MCF 10A (cell line): ENCODE measurements at regions of chr12 and their contacts with region 1.

Region 1: GRCh38 chr12:92928962-92929915 is at the start of gene EEA1:
- DNase-seq: peak; percentile 95
- H3K4me3 Mint-ChIP-seq: peak within 1 kb of the TSS; percentile 75
- H3K27ac Mint-ChIP-seq: peak within 1 kb of the TSS; percentile 88
- H3K4me1 Mint-ChIP-seq: peaks cover 26% of the 10 kb centered on the region
- H3K27me3 Mint-ChIP-seq: no peaks in the 10 kb centered on the region
- CTCF ChIP-seq: no peak
- total RNA-seq, gene EEA1: 46.3 and 50.1 TPM in 2 replicates

Region 2: GRCh38 chr12:92827836-92828431 is 101.3 kb before region 1 on chr12:
- CTCF ChIA-PET with region 1: interaction called, 4 read pairs
- POLR2A ChIA-PET with region 1: interaction called, 31 read pairs
- intact Hi-C with region 1: no loop called
- DNase-seq: peak; percentile 69
- H3K4me3 Mint-ChIP-seq: no peak overlapping the region
- H3K27ac Mint-ChIP-seq: no peak overlapping the region
- H3K4me1 Mint-ChIP-seq: no peaks in the 10 kb centered on the region
- H3K27me3 Mint-ChIP-seq: no peaks in the 10 kb centered on the region
- CTCF ChIP-seq: peak; percentile 78

Region 3: DNA sequence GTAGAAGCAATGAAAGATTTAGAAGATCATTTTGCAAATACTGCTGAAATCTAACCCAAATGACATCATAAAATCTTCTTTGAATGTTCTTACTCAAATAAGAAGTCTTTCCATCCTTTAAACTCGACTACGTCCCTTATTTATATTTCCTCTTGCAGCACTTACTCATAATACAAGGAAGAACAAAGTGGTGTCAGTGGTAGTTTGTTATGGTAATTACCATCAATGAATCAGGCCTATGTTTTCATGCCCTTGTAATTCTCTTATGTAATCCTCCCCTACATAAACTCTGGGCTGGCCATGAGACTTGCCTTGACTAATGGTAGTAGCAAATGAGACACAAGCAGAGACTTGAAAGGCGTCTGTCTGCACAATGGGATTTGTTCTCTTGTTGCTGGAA is 17.2 kb before region 1 on chr12:
- CTCF ChIA-PET with region 1: interaction called, 8 read pairs
- POLR2A ChIA-PET with region 1: interaction called, 73 read pairs
- intact Hi-C with region 1: no loop called
- DNase-seq: peak; percentile 86
- H3K4me3 Mint-ChIP-seq: no peak overlapping the region
- H3K27ac Mint-ChIP-seq: peak overlapping the region; percentile 38
- H3K4me1 Mint-ChIP-seq: peaks cover 21% of the 10 kb centered on the region
- H3K27me3 Mint-ChIP-seq: no peaks in the 10 kb centered on the region
- CTCF ChIP-seq: no peak

Region 4: GRCh38 chr12:92973601-92974000 is 44.4 kb after region 1 on chr12:
- CTCF ChIA-PET with region 1: interaction called, 4 read pairs
- POLR2A ChIA-PET with region 1: interaction called, 105 read pairs
- intact Hi-C with region 1: loop called (anchors 5 kb)
- DNase-seq: peak; percentile 97
- H3K4me3 Mint-ChIP-seq: peak overlapping the region; percentile 51
- H3K27ac Mint-ChIP-seq: peak overlapping the region; percentile 94
- H3K4me1 Mint-ChIP-seq: peaks cover 25% of the 10 kb centered on the region
- H3K27me3 Mint-ChIP-seq: no peaks in the 10 kb centered on the region
- CTCF ChIP-seq: no peak

Region 5: DNA sequence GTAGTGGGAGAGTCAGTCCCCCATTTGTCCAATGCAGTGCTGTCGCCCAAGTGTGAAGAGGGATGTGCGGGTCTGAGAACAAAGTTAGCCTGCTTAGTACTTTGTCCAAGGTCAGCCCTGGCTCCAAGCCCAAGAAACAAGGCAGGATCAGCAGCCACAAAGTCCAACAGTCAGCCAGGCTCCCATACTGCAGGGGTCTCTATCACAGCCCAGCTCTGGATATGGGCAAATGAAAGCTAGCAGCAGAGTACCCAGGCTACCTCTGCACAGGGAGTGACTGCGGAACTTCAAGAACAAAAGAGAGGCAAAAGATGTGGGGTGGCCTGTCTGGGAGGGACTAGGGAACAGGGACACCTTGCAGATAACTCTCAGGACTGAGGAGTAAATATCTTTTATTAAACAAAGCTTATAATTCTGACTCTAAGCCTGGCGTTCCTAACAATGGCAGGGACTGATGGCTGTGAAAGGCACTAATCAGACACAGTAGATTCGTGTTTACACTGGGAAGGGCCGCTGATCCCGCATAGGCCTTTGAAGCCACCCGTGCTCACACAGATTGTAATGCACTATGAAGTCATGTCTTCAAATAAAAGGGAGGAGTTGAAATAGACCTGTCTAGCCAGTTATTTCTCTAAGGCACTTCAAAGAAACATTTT is 90.9 kb after region 1 on chr12:
- CTCF ChIA-PET with region 1: no interaction called
- POLR2A ChIA-PET with region 1: no interaction called
- intact Hi-C with region 1: no loop called
- DNase-seq: no peak
- H3K4me3 Mint-ChIP-seq: no peak overlapping the region
- H3K27ac Mint-ChIP-seq: no peak overlapping the region
- H3K4me1 Mint-ChIP-seq: no peaks in the 10 kb centered on the region
- H3K27me3 Mint-ChIP-seq: no peaks in the 10 kb centered on the region
- CTCF ChIP-seq: no peak

Region 6: GRCh38 chr12:93127582-93128331 is 198.5 kb after region 1 on chr12:
- CTCF ChIA-PET with region 1: interaction called, 4 read pairs
- POLR2A ChIA-PET with region 1: interaction called, 18 read pairs
- intact Hi-C with region 1: no loop called
- DNase-seq: peak; percentile 96
- H3K4me3 Mint-ChIP-seq: peak overlapping the region; percentile 49
- H3K27ac Mint-ChIP-seq: peak overlapping the region; percentile 81
- H3K4me1 Mint-ChIP-seq: peaks cover 33% of the 10 kb centered on the region
- H3K27me3 Mint-ChIP-seq: no peaks in the 10 kb centered on the region
- CTCF ChIP-seq: peak; percentile 33

Region 7: DNA sequence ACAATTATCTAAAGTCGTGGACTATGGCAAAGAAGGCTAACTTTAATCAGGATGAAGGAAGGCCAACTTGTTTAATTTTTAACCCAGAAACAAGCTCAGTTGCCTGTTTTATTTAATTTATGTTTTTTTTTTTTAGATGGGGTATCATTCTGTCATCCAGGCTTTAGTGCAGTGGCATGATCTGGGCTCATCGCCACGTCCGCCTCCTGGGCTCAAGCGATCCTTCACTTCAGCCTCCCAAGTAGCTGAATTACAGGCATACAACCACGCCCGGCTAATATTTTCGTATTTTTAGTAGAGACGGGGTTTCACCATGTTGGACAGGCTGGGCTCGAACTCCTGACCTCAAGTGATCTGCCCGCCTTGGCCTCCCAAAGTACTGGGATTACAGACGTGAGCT is 468.2 kb after region 1 on chr12:
- CTCF ChIA-PET with region 1: interaction called, 4 read pairs
- POLR2A ChIA-PET with region 1: interaction called, 8 read pairs
- intact Hi-C with region 1: loop called (anchors 5 kb)
- DNase-seq: no peak
- H3K4me3 Mint-ChIP-seq: no peak overlapping the region
- H3K27ac Mint-ChIP-seq: no peak overlapping the region
- H3K4me1 Mint-ChIP-seq: no peaks in the 10 kb centered on the region
- H3K27me3 Mint-ChIP-seq: no peaks in the 10 kb centered on the region
- CTCF ChIP-seq: no peak